ENCODE measurements at regions of chr7 and their contacts with region 1.

Region 1: GRCh38 chr7:38637957-38638356 is 6.8 kb upstream of the AMPH start:
- DNase-seq: no peak
- H3K4me3 ChIP-seq: no peak overlapping the region
- H3K4me3 Mint-ChIP-seq: no peak overlapping the region
- H3K27ac Mint-ChIP-seq: no peak overlapping the region
- H3K4me1 ChIP-seq: no peaks in the 10 kb centered on the region
- H3K4me1 Mint-ChIP-seq: no peaks in the 10 kb centered on the region
- H3K27me3 ChIP-seq: no peaks in the 10 kb centered on the region
- H3K27me3 Mint-ChIP-seq: peaks cover 9% of the 10 kb centered on the region
- CTCF ChIP-seq: no peak

Region 2: DNA sequence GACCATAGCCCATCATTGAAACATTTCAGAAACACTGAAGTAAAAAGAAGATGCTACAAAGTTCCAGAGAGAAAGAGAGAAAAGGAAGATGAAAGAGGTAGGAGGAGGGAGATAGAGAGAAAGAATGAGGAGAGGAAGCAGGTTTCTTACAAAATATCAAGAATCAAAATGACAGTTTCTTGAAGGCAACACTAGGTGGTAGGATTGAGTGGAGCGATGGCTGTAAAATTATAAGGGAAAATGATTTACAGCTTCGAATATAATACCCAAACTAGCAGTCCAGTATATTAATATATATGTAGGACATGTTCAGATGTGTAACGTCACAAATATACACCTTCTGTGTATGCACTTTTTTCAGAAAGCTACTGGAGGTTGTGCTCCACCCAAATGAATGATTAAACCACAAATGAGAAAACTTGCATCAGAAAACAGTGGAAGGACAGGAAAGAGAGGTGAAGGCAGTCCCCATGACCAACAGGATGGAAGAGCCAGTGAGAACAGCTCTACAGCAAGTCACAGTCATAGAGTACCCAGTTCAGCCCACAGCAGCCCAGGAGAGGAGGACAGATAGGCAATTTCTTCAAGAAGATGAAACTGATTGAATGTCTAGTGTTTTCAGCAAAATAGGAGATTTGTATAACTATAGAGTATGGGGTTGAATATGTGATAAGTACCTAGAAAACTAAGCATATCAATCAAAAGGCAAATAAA is 213.1 kb before region 1 on chr7:
- CTCF ChIA-PET with region 1: no interaction called
- POLR2A ChIA-PET with region 1: no interaction called
- intact Hi-C with region 1: loop called (anchors 10 kb)
- DNase-seq: no peak
- H3K4me3 ChIP-seq: no peak overlapping the region
- H3K4me3 Mint-ChIP-seq: no peak overlapping the region
- H3K27ac Mint-ChIP-seq: no peak overlapping the region
- H3K4me1 ChIP-seq: no peaks in the 10 kb centered on the region
- H3K4me1 Mint-ChIP-seq: no peaks in the 10 kb centered on the region
- H3K27me3 ChIP-seq: no peaks in the 10 kb centered on the region
- H3K27me3 Mint-ChIP-seq: peaks cover 27% of the 10 kb centered on the region
- CTCF ChIP-seq: peak in 1 of 2 experiments; percentile 8

Region 3: GRCh38 chr7:38561166-38561565 is 76.8 kb before region 1 on chr7:
- CTCF ChIA-PET with region 1: no interaction called
- POLR2A ChIA-PET with region 1: no interaction called
- intact Hi-C with region 1: no loop called
- DNase-seq: no peak
- H3K4me3 ChIP-seq: no peak overlapping the region
- H3K4me3 Mint-ChIP-seq: no peak overlapping the region
- H3K27ac Mint-ChIP-seq: no peak overlapping the region
- H3K4me1 ChIP-seq: no peaks in the 10 kb centered on the region
- H3K4me1 Mint-ChIP-seq: no peaks in the 10 kb centered on the region
- H3K27me3 ChIP-seq: no peaks in the 10 kb centered on the region; the same call in 1 of the 2 replicates
- H3K27me3 Mint-ChIP-seq: peaks cover 13% of the 10 kb centered on the region
- CTCF ChIP-seq: no peak

Region 4: GRCh38 chr7:38600746-38601145 is 37.2 kb before region 1 on chr7:
- CTCF ChIA-PET with region 1: no interaction called
- POLR2A ChIA-PET with region 1: no interaction called
- intact Hi-C with region 1: no loop called
- DNase-seq: no peak
- H3K4me3 ChIP-seq: no peak overlapping the region
- H3K4me3 Mint-ChIP-seq: no peak overlapping the region
- H3K27ac Mint-ChIP-seq: no peak overlapping the region
- H3K4me1 ChIP-seq: no peaks in the 10 kb centered on the region
- H3K4me1 Mint-ChIP-seq: no peaks in the 10 kb centered on the region
- H3K27me3 ChIP-seq: no peaks in the 10 kb centered on the region; the same call in 1 of the 2 replicates
- H3K27me3 Mint-ChIP-seq: peaks cover 22% of the 10 kb centered on the region
- CTCF ChIP-seq: no peak

Region 5: GRCh38 chr7:38660427-38661099 is 22.6 kb after region 1 on chr7:
- CTCF ChIA-PET with region 1: no interaction called
- POLR2A ChIA-PET with region 1: no interaction called
- intact Hi-C with region 1: no loop called
- DNase-seq: peak in 1 of 2 experiments; percentile 29
- H3K4me3 ChIP-seq: no peak overlapping the region
- H3K4me3 Mint-ChIP-seq: no peak overlapping the region
- H3K27ac Mint-ChIP-seq: no peak overlapping the region
- H3K4me1 ChIP-seq: no peaks in the 10 kb centered on the region
- H3K4me1 Mint-ChIP-seq: no peaks in the 10 kb centered on the region
- H3K27me3 ChIP-seq: no peaks in the 10 kb centered on the region
- H3K27me3 Mint-ChIP-seq: peaks cover 15% of the 10 kb centered on the region
- CTCF ChIP-seq: peak; percentile 45 to 54

Region 6: GRCh38 chr7:38781991-38782390 is 144.0 kb after region 1 on chr7:
- CTCF ChIA-PET with region 1: no interaction called
- POLR2A ChIA-PET with region 1: no interaction called
- intact Hi-C with region 1: no loop called
- DNase-seq: no peak
- H3K4me3 ChIP-seq: no peak overlapping the region
- H3K4me3 Mint-ChIP-seq: no peak overlapping the region
- H3K27ac Mint-ChIP-seq: no peak overlapping the region
- H3K4me1 ChIP-seq: no peaks in the 10 kb centered on the region
- H3K4me1 Mint-ChIP-seq: no peaks in the 10 kb centered on the region
- H3K27me3 ChIP-seq: no peaks in the 10 kb centered on the region
- H3K27me3 Mint-ChIP-seq: no peaks in the 10 kb centered on the region
- CTCF ChIP-seq: no peak